OCI-LY7 (cell line): ENCODE measurements at regions of chr10 and their contacts with region 1.

Region 1: DNA sequence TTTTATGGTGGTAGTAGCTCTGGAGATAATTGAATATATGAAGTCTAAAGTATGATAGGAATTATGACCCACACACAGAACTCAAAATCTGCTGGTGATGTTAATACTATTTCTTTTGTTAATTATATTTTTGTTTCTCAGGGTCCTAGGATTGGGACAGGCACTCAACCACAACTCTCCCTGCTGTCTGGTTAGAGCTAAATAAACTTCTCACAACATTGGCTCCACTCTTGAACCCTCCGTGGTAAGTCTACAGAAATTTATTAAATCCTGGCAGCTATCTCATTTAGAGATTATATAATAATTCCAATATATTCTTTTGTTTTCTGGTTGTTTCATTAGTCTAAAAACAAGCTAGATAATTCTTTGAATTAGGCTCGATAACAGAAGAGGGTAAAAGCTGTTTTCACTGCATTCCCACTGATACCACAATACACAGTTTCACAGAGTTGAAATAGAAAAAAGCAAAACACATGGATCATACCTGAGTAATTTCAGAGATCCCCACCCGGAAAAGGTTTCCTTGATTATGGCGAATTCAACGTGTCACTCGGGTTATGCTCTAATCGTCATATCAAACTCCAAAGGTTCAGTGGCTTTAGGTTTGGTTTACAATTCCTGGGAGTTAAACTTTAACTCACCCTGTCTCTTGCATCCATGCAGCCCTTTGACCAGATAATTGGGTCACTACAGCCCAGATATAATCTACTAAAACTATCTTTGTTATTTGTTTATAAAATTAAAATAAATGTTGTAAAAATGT is at the start of gene A1CF:
- DNase-seq: no peak
- H3K4me3 ChIP-seq: no peak within 1 kb of the TSS
- H3K27ac ChIP-seq: no peak within 1 kb of the TSS
- H3K4me1 ChIP-seq: no peaks in the 10 kb centered on the region
- CTCF ChIP-seq: no peak
- total RNA-seq, gene A1CF: not detected in 2 replicates

Region 2: GRCh38 chr10:50552771-50553535 is 332.3 kb before region 1 on chr10:
- CTCF ChIA-PET with region 1: no interaction called
- POLR2A ChIA-PET with region 1: no interaction called
- intact Hi-C with region 1: loop called (anchors 5 kb)
- DNase-seq: peak; percentile 27
- H3K4me3 ChIP-seq: no peak overlapping the region
- H3K27ac ChIP-seq: no peak overlapping the region
- H3K4me1 ChIP-seq: peaks cover 16% of the 10 kb centered on the region
- CTCF ChIP-seq: peak; percentile 60

Region 3: DNA sequence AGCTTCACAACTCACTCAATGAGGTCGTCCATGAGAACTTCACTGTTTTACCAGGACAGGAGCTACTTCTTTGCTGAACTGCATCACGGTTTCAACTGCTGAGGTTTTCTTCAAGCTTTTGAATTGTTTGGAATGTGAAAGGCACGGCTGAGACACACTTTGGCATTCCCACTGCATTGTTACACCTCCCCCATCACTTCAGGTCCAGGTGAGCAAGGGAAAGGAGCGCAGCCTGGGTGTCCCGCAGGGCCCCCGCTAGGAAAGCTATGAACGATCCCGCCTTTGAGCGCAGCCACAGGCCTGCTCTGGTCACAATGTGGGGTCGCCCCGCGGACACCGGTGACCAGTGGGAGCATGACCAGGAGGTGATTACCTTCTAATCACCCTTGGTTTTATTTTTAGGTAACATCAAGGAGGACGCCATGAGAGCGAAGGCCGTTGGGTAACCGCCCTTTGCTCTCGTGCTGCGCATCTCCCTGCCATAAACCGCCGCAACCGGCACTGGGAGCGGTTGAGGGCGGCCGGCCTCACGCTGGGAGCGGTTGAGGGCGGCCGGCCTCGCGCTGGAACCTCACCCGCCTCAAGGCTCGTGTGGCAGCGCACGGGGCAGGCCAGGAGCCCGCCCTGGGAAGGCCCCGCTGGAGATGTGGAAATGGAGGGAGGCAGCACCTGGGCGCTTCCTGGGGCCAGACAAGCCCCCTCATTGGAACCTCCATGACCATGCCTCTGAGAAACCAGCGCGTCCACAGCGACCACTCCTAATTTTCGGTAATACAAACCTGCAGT is 210.6 kb before region 1 on chr10:
- CTCF ChIA-PET with region 1: no interaction called
- POLR2A ChIA-PET with region 1: no interaction called
- intact Hi-C with region 1: loop called (anchors 10 kb)
- DNase-seq: no peak
- H3K4me3 ChIP-seq: no peak overlapping the region
- H3K27ac ChIP-seq: no peak overlapping the region
- H3K4me1 ChIP-seq: peaks cover 16% of the 10 kb centered on the region
- CTCF ChIP-seq: no peak